GM12878 (cell line): ENCODE measurements at regions of chr7 and their contacts with region 1.

Region 1: DNA sequence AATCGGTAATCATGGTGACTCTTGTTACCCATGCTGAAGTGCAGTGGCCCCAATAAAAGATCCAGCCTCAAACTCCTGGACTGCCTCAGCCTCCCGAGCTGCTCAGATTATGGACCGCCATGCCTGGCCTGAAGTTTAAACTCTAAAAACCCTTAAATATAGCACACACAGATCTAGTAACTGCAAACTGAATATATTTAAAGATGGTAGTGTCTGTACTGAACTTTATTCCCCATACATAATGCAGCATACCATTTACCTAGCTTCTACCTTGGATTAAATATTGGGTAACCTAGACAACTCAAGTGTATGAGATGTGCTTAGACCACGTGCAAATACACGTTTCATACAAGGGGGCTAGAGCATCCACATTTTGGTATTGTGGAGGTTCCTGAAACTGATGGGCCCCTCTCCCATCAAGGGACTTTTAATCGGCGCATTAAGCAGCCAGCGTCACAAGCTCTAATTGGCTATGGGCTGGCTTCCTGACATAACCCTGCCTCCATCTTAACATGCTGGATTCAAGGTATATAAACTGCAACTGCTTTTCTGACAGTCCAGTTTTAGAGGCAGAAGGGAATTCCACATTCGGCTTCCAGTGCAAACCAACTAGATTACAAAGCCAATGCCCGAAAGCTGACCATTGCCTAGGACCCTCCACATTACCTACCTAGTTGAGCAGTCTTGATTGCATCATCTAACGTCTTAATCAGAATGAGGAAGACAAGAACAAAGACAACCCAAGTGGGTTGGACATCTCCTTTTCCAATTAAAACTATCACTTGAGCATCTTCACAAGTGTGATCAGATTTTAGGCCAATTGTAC is 13.0 kb downstream of the HNRNPA2B1 start:
- DNase-seq: no peak
- ATAC-seq: peak; percentile 23
- H3K4me3 ChIP-seq: no peak overlapping the region
- H3K27ac ChIP-seq: no peak overlapping the region
- H3K4me1 ChIP-seq: peaks cover 12% of the 10 kb centered on the region
- H3K27me3 ChIP-seq: no peaks in the 10 kb centered on the region
- CTCF ChIP-seq: no peak
- EP300 ChIP-seq: no peak
- POLR2A ChIP-seq: peak; percentile 75
- RAD21 ChIP-seq: no peak

Region 2: GRCh38 chr7:26160881-26161280 is 26.7 kb before region 1 on chr7:
- CTCF ChIA-PET with region 1: interaction called, 30 read pairs
- POLR2A ChIA-PET with region 1: interaction called, 206 read pairs
- RAD21 ChIA-PET with region 1: interaction called, 164 read pairs
- SMC1A ChIA-PET with region 1: interaction called, 198 read pairs
- in situ Hi-C with region 1: no loop called
- intact Hi-C with region 1: loop called (anchors 2 kb)
- DNase-seq: no peak
- ATAC-seq: no peak
- H3K4me3 ChIP-seq: no peak overlapping the region
- H3K27ac ChIP-seq: no peak overlapping the region
- H3K4me1 ChIP-seq: peaks cover 28% of the 10 kb centered on the region
- H3K27me3 ChIP-seq: no peaks in the 10 kb centered on the region
- CTCF ChIP-seq: no peak
- EP300 ChIP-seq: no peak
- POLR2A ChIP-seq: no peak
- RAD21 ChIP-seq: no peak

Region 3: DNA sequence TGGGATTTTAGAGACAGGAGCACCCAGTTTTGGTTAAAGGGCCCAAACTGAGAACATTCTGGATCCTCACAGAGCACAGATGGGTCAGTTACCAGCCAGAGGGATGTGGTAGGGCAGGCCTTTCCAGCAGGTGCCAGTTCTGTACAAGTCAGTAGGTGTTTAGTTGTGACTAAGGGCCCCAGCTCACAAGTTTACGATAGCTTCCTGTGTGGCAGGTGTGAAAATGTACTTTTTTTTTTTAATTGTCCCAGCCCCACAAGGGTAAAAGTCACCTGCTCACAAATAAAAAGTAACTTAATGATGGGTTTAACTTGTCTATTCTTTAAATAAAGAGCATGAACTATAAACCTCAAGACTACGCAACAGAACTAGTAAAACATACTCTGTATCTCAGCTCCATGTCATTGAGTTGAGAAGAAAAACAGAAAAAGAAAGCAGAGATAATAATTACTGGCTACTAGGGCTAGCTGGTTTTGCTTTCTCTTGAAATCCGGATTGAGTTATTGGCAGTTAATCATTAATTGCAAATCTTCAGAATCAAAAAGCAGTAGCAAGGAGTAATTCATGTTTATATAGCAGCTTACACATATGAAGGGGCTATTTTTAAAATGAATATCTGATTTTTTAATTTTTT is 20.2 kb before region 1 on chr7:
- CTCF ChIA-PET with region 1: interaction called, 8 read pairs
- POLR2A ChIA-PET with region 1: interaction called, 206 read pairs
- RAD21 ChIA-PET with region 1: interaction called, 164 read pairs
- SMC1A ChIA-PET with region 1: interaction called, 198 read pairs
- in situ Hi-C with region 1: no loop called
- intact Hi-C with region 1: no loop called
- DNase-seq: no peak
- ATAC-seq: peak; percentile 94
- H3K4me3 ChIP-seq: 0 out of 2 replicates have a peak overlapping the region, but pooled peaks have one; percentile 31
- H3K27ac ChIP-seq: peak overlapping the region; percentile 43
- H3K4me1 ChIP-seq: peaks cover 17% of the 10 kb centered on the region
- H3K27me3 ChIP-seq: no peaks in the 10 kb centered on the region
- CTCF ChIP-seq: no peak
- EP300 ChIP-seq: no peak
- POLR2A ChIP-seq: no peak
- RAD21 ChIP-seq: no peak

Region 4: GRCh38 chr7:26224359-26224758 is 36.8 kb after region 1 on chr7:
- CTCF ChIA-PET with region 1: no interaction called
- POLR2A ChIA-PET with region 1: no interaction called
- RAD21 ChIA-PET with region 1: no interaction called
- SMC1A ChIA-PET with region 1: no interaction called
- in situ Hi-C with region 1: no loop called
- intact Hi-C with region 1: no loop called
- DNase-seq: no peak
- ATAC-seq: no peak
- H3K4me3 ChIP-seq: no peak overlapping the region
- H3K27ac ChIP-seq: no peak overlapping the region
- H3K4me1 ChIP-seq: no peaks in the 10 kb centered on the region
- H3K27me3 ChIP-seq: no peaks in the 10 kb centered on the region; a peak in 2 of 4 replicates
- CTCF ChIP-seq: no peak
- EP300 ChIP-seq: no peak
- POLR2A ChIP-seq: no peak
- RAD21 ChIP-seq: no peak